CD4-positive, alpha-beta T cell (primary cell): ENCODE measurements at regions of chr12 and their contacts with region 1.

Region 1: GRCh38 chr12:48826209-48826894 is 8.1 kb downstream of the CACNB3 start:
- DNase-seq: no peak
- ATAC-seq: no peak
- H3K4me3 ChIP-seq: no peak overlapping the region
- H3K4me3 Mint-ChIP-seq: no peak overlapping the region
- H3K27ac ChIP-seq: no peak overlapping the region
- H3K27ac Mint-ChIP-seq: peak overlapping the region; percentile 24
- H3K4me1 ChIP-seq: peaks cover 5% of the 10 kb centered on the region
- H3K4me1 Mint-ChIP-seq: no peaks in the 10 kb centered on the region
- H3K27me3 ChIP-seq: no peaks in the 10 kb centered on the region
- H3K27me3 Mint-ChIP-seq: no peaks in the 10 kb centered on the region
- CTCF ChIP-seq: no peak

Region 2: GRCh38 chr12:48814262-48815125 is 11.9 kb before region 1 on chr12:
- CTCF ChIA-PET with region 1: interaction called, 11 read pairs
- POLR2A ChIA-PET with region 1: interaction called, 8 read pairs
- intact Hi-C with region 1: no loop called
- DNase-seq: peak; percentile 45 to 87 (median 66)
- ATAC-seq: peak; percentile 51
- H3K4me3 ChIP-seq: peak overlapping the region; percentile 76
- H3K4me3 Mint-ChIP-seq: peak overlapping the region; percentile 94
- H3K27ac ChIP-seq: peak overlapping the region in 1 of 2 donors; percentile 24
- H3K27ac Mint-ChIP-seq: no peak overlapping the region
- H3K4me1 ChIP-seq: peaks cover 51% of the 10 kb centered on the region
- H3K4me1 Mint-ChIP-seq: peaks cover 44% of the 10 kb centered on the region
- H3K27me3 ChIP-seq: no peaks in the 10 kb centered on the region
- H3K27me3 Mint-ChIP-seq: no peaks in the 10 kb centered on the region
- CTCF ChIP-seq: peak; percentile 90

Region 3: DNA sequence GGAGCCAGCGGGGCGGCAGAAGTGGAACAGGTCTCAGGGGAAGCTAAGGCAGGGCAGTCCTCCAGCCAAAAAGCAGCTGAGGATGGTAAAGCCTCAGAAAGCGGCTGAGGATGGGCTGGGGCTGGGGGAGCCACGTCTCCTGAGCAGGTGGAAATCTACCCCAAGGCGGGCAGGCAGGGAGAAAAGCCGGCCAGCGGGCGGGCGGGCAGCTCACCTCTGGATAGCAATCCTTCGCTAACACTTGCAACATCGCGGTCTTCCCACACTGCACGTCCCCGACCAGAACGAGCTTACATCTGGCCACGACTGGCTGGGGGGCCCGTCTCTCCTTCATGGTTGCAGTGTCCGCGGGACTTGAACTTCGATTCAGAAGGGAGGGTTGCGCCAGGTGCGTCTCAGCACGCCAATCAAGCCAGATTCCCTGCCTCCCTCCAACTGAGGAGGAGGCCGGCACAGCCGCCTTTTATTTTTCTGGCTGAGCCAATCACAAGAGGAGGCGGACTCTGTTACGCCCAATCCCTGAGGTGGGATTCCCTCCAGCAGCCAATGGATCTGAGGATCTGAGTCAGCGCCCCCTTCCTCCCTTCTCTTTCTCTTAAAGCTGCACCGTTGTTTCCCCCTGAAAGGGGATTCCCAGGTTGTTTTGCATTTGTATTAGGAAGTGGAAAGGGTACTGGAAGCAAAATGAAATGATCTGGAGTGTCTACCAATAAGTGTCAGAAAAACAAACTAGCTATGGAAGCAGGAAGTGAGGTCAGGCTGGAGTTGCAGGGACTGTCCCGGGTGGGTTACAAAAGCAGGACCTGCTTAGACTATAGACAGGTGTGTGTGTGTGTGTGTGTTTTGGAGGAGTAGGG is 39.3 kb after region 1 on chr12 and contains the start of gene RND1:
- CTCF ChIA-PET with region 1: no interaction called
- POLR2A ChIA-PET with region 1: no interaction called
- intact Hi-C with region 1: no loop called
- DNase-seq: peak; percentile 67 to 95 (median 78)
- ATAC-seq: peak; percentile 96
- H3K4me3 ChIP-seq: peak within 1 kb of the TSS; percentile 71
- H3K4me3 Mint-ChIP-seq: peak within 1 kb of the TSS; percentile 90
- H3K27ac ChIP-seq: peak within 1 kb of the TSS in 1 of 2 donors; percentile 25
- H3K27ac Mint-ChIP-seq: peak within 1 kb of the TSS; percentile 72
- H3K4me1 ChIP-seq: peaks cover 23% of the 10 kb centered on the region
- H3K4me1 Mint-ChIP-seq: peaks cover 28% of the 10 kb centered on the region
- H3K27me3 ChIP-seq: peaks cover 20 to 30% of the 10 kb centered on the region in 2 experiments
- H3K27me3 Mint-ChIP-seq: peaks cover 35% of the 10 kb centered on the region
- CTCF ChIP-seq: no peak
- total RNA-seq, gene RND1: 4.8 to 5.7 TPM